Natural killer cell (primary cell): ENCODE measurements at regions of chrX and their contacts with region 1.

Region 1: DNA sequence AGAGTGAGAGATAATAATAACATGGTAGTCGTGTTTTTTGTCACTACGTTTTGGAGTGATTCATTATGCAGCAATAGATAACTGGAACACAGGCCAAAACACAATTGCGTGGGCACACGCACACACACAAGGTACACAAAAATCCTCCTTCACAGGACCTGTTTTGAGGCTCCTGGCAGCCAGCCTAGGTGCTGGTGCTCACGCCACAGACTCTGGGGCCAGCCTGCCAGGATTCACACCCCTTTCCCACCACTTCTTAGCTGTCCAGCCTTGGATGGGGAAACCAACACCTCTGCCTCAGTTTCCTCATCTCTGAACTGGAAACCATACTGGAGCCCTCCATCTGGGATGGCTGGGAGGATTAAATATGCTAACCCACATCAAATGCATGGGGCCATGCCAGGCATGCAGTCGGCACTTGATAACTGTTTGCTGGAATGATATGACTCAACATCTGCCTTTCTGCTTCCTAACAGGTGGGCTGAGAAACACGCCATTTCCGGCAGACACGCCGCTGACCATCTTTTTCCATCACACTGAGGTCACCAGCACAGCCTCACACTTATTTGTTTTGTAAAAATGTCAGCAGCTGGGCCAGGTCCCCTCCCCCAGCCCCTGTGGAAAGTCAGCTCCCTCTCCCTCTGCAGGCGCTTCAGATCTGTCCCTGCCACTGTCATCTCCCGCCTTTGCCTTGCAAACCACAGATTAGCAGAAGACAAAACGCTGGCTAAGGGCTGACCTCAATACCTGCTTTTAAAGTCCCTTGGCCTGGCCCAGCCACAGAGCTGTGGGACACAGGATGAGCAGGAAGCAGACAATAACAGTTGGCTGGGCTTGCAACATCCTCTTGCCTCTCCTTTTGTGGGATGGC is 237.5 kb downstream of the BCOR start:
- DNase-seq: peak; percentile 68 to 75
- ATAC-seq: peak; percentile 66 to 72 (median 71)
- H3K4me3 ChIP-seq: no peak overlapping the region
- H3K4me3 Mint-ChIP-seq: peak overlapping the region; percentile 42
- H3K27ac ChIP-seq: peak overlapping the region; percentile 35
- H3K27ac Mint-ChIP-seq: peak overlapping the region; percentile 58 to 89
- H3K4me1 ChIP-seq: peaks cover 52% of the 10 kb centered on the region
- H3K4me1 Mint-ChIP-seq: peaks cover 23 to 38% of the 10 kb centered on the region in 2 donors
- H3K27me3 ChIP-seq: no peaks in the 10 kb centered on the region
- H3K27me3 Mint-ChIP-seq: peaks cover 0 to 6% of the 10 kb centered on the region in 2 donors
- CTCF ChIP-seq: no peak

Region 2: GRCh38 chrX:39814391-39814790 is 45.8 kb before region 1 on chrX:
- intact Hi-C with region 1: loop called (anchors 2 kb)
- DNase-seq: peak; percentile 25 to 78
- ATAC-seq: peak; percentile 48 to 80 (median 76)
- H3K4me3 ChIP-seq: no peak overlapping the region
- H3K4me3 Mint-ChIP-seq: no peak overlapping the region
- H3K27ac ChIP-seq: no peak overlapping the region
- H3K27ac Mint-ChIP-seq: peak overlapping the region in 1 of 2 donors; percentile 54
- H3K4me1 ChIP-seq: peaks cover 4% of the 10 kb centered on the region
- H3K4me1 Mint-ChIP-seq: peaks cover 0 to 5% of the 10 kb centered on the region in 2 donors
- H3K27me3 ChIP-seq: no peaks in the 10 kb centered on the region
- H3K27me3 Mint-ChIP-seq: peaks cover 8 to 28% of the 10 kb centered on the region in 2 donors
- CTCF ChIP-seq: peak; percentile 47

Region 3: GRCh38 chrX:39883666-39884065 is 23.4 kb after region 1 on chrX:
- intact Hi-C with region 1: loop called (anchors 1 kb)
- DNase-seq: peak in 1 of 2 donors; percentile 23
- ATAC-seq: peak; percentile 55 to 90 (median 85)
- H3K4me3 ChIP-seq: no peak overlapping the region
- H3K4me3 Mint-ChIP-seq: no peak overlapping the region
- H3K27ac ChIP-seq: no peak overlapping the region
- H3K27ac Mint-ChIP-seq: peak overlapping the region; percentile 30 to 70
- H3K4me1 ChIP-seq: no peaks in the 10 kb centered on the region
- H3K4me1 Mint-ChIP-seq: peaks cover 11 to 14% of the 10 kb centered on the region in 2 donors
- H3K27me3 ChIP-seq: no peaks in the 10 kb centered on the region
- H3K27me3 Mint-ChIP-seq: peaks cover 3 to 19% of the 10 kb centered on the region in 2 donors
- CTCF ChIP-seq: no peak

Region 4: GRCh38 chrX:39896951-39897740 is 36.9 kb after region 1 on chrX:
- intact Hi-C with region 1: no loop called
- DNase-seq: no peak
- ATAC-seq: no peak
- H3K4me3 ChIP-seq: no peak overlapping the region
- H3K4me3 Mint-ChIP-seq: no peak overlapping the region
- H3K27ac ChIP-seq: no peak overlapping the region
- H3K27ac Mint-ChIP-seq: no peak overlapping the region
- H3K4me1 ChIP-seq: peaks cover 5% of the 10 kb centered on the region
- H3K4me1 Mint-ChIP-seq: no peaks in the 10 kb centered on the region
- H3K27me3 ChIP-seq: peaks cover 2% of the 10 kb centered on the region
- H3K27me3 Mint-ChIP-seq: peaks cover 10 to 33% of the 10 kb centered on the region in 2 donors
- CTCF ChIP-seq: no peak

Region 5: GRCh38 chrX:40097497-40098263 is 237.5 kb after region 1 on chrX and contains the start of gene BCOR:
- intact Hi-C with region 1: loop called (anchors 5 kb)
- DNase-seq: peak; percentile 56 to 86
- ATAC-seq: peak; percentile 35 to 61 (median 52)
- H3K4me3 ChIP-seq: peak within 1 kb of the TSS; percentile 58
- H3K4me3 Mint-ChIP-seq: peak within 1 kb of the TSS; percentile 91
- H3K27ac ChIP-seq: peak within 1 kb of the TSS; percentile 78
- H3K27ac Mint-ChIP-seq: peak within 1 kb of the TSS; percentile 85 to 89
- H3K4me1 ChIP-seq: peaks cover 31% of the 10 kb centered on the region
- H3K4me1 Mint-ChIP-seq: peaks cover 31 to 35% of the 10 kb centered on the region in 2 donors
- H3K27me3 ChIP-seq: no peaks in the 10 kb centered on the region
- H3K27me3 Mint-ChIP-seq: peaks cover 0 to 11% of the 10 kb centered on the region in 2 donors
- CTCF ChIP-seq: no peak
- total RNA-seq, gene BCOR: 20.0 to 35.2 (median 29.2) TPM

Region 6: DNA sequence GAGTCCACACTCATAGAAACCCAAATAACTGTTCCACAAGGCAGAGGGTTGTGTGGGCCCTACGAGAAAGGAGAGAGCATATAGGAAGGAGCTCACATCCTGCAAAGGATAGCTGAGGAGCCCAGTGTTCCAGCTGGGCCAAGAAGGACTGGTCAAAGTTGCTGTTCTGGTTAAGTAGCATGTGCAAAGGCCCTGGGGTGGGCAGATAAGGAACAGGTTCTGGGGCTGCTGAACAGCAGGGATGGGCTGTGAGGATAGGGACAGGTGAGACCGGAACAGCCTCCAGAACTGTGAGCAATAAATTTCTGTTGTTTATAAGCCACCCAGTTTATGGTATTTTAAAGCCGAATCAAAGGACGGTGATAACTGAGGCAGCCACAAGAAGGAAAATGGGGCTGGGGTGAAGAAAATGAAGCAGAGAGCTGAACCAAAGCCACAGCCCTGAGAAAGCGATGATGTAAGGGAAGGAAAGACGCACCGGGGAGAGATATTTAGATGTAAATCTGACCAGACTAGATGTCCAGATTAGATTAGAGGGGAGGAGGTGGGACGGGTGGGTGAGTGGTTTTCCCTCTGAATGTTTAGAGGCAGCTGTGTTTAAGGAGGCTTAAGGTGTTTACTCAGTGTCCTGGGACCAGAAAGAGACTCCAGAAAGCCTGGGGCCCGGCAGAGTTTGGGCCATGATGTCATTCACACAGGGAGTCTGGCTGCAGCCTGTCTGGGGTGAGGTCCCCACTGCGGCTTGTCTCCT is 418.3 kb after region 1 on chrX:
- intact Hi-C with region 1: loop called (anchors 5 kb)
- DNase-seq: peak; percentile 63 to 82
- ATAC-seq: peak; percentile 76 to 88 (median 84)
- H3K4me3 ChIP-seq: no peak overlapping the region
- H3K4me3 Mint-ChIP-seq: peak overlapping the region; percentile 63
- H3K27ac ChIP-seq: peak overlapping the region; percentile 56
- H3K27ac Mint-ChIP-seq: peak overlapping the region; percentile 85 to 95
- H3K4me1 ChIP-seq: peaks cover 41% of the 10 kb centered on the region
- H3K4me1 Mint-ChIP-seq: peaks cover 33% of the 10 kb centered on the region in 2 donors
- H3K27me3 ChIP-seq: no peaks in the 10 kb centered on the region
- H3K27me3 Mint-ChIP-seq: peaks cover 2 to 19% of the 10 kb centered on the region in 2 donors
- CTCF ChIP-seq: no peak